IMR-90 (cell line): ENCODE measurements at regions of chr1 and their contacts with region 1.

Region 1: GRCh38 chr1:223133824-223134435 is 9.1 kb downstream of the TLR5 start:
- DNase-seq: peak; percentile 78
- ATAC-seq: peak; percentile 97
- H3K4me3 ChIP-seq: peak overlapping the region; percentile 17; the same call in 1 of the 2 replicates
- H3K27ac ChIP-seq: no peak overlapping the region
- H3K4me1 ChIP-seq: no peaks in the 10 kb centered on the region; the same call in 1 of the 2 replicates
- H3K27me3 ChIP-seq: peaks cover 36% of the 10 kb centered on the region
- CTCF ChIP-seq: peak; percentile 93
- POLR2A ChIP-seq: no peak
- RAD21 ChIP-seq: peak; percentile 82

Region 2: DNA sequence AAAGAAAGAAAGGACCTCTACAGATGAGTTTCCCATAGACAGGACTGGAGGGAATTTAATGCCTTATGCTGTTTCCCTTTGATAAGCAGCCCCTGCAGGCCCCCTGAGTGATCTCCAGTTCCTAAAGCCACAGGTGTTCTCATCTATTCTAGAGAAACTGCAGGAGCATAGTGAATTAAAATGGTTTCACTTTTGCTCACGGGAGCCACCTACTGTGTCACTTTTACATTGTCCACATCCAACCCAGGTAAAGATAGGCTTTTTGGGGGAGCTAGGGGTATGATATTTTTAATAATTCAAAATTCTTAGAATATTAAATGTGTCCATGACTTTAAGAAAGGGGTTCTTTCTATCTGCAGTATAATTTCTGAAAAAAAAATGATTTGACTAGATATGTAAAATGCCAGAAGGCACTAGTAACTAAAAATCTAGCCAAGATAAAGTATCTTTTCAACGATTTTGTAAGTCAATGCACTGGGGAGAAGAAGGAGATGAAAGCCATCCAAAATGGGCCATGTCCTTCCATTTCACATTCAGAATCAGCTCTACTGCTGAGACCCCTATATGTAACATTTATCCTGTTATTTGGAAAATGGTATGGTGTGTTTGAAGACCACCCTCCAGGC is 1124.7 kb before region 1 on chr1:
- CTCF ChIA-PET with region 1: no interaction called
- POLR2A ChIA-PET with region 1: no interaction called
- dilution Hi-C with region 1: no loop called
- in situ Hi-C with region 1: no loop called
- intact Hi-C with region 1: no loop called
- DNase-seq: no peak
- ATAC-seq: no peak
- H3K4me3 ChIP-seq: no peak overlapping the region
- H3K27ac ChIP-seq: no peak overlapping the region
- H3K4me1 ChIP-seq: no peaks in the 10 kb centered on the region
- H3K27me3 ChIP-seq: no peaks in the 10 kb centered on the region
- CTCF ChIP-seq: 0 out of 2 replicates have a peak, but pooled peaks have one; percentile 25
- POLR2A ChIP-seq: no peak
- RAD21 ChIP-seq: no peak

Region 3: DNA sequence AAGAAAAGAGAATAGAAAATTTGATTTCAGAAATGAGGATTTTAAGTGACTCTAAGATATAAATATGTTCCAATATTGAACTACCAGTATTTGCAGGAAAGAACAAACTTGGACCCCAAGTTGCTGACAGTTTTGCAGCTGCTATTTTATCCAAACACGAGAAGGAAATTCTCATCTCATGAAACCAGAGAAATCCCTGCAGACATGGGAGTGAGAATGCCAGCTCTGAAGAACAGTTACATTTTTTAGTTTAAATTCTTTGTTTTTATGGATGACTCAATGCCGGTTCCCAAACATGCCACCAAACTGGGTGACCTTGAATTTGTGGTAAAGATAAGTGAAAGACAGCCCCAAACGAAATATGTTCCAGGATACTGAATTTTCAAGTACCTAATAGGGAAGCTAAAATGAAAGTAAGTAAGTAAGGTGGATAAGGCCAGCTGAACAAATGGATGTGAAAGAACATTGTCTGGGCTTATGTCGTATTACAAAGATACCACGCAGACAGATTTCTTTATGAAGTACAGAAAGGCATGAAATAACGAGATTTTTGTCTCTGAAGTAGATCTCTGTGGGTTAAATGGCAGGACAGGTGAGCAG is 10.8 kb before region 1 on chr1:
- CTCF ChIA-PET with region 1: interaction called, 35 read pairs
- POLR2A ChIA-PET with region 1: no interaction called
- dilution Hi-C with region 1: no loop called
- in situ Hi-C with region 1: no loop called
- intact Hi-C with region 1: no loop called
- DNase-seq: no peak
- ATAC-seq: peak; percentile 27; the same call in 1 of the 2 replicates
- H3K4me3 ChIP-seq: no peak overlapping the region
- H3K27ac ChIP-seq: no peak overlapping the region
- H3K4me1 ChIP-seq: no peaks in the 10 kb centered on the region
- H3K27me3 ChIP-seq: peaks cover 5% of the 10 kb centered on the region
- CTCF ChIP-seq: no peak
- POLR2A ChIP-seq: no peak
- RAD21 ChIP-seq: no peak

Region 4: GRCh38 chr1:223244366-223245103 is 110.6 kb after region 1 on chr1:
- CTCF ChIA-PET with region 1: interaction called, 7 read pairs
- POLR2A ChIA-PET with region 1: no interaction called
- dilution Hi-C with region 1: no loop called
- in situ Hi-C with region 1: no loop called
- intact Hi-C with region 1: loop called (anchors 2 kb)
- DNase-seq: peak; percentile 46
- ATAC-seq: no peak
- H3K4me3 ChIP-seq: no peak overlapping the region
- H3K27ac ChIP-seq: no peak overlapping the region
- H3K4me1 ChIP-seq: no peaks in the 10 kb centered on the region
- H3K27me3 ChIP-seq: peaks cover 14% of the 10 kb centered on the region
- CTCF ChIP-seq: peak; percentile 50
- POLR2A ChIP-seq: no peak
- RAD21 ChIP-seq: peak; percentile 60